ENCODE measurements at regions of chr18 and their contacts with region 1.

Region 1: GRCh38 chr18:9147440-9148202 is 11.0 kb downstream of the ANKRD12 start:
- DNase-seq: no peak
- H3K4me3 ChIP-seq: no peak overlapping the region
- H3K27ac ChIP-seq: peak overlapping the region in 1 of 2 donors; percentile 22
- H3K4me1 ChIP-seq: peaks cover 0 to 89% (median 38%) of the 10 kb centered on the region in 4 donors
- H3K27me3 ChIP-seq: no peaks in the 10 kb centered on the region
- CTCF ChIP-seq: peak; percentile 70 to 83

Region 2: GRCh38 chr18:8696749-8697211 is 450.8 kb before region 1 on chr18:
- intact Hi-C with region 1: loop called (anchors 5 kb)
- DNase-seq: peak; percentile 75 to 85
- H3K4me3 ChIP-seq: no peak overlapping the region
- H3K27ac ChIP-seq: no peak overlapping the region
- H3K4me1 ChIP-seq: no peaks in the 10 kb centered on the region
- H3K27me3 ChIP-seq: no peaks in the 10 kb centered on the region
- CTCF ChIP-seq: peak; percentile 76 to 81

Region 3: GRCh38 chr18:9069601-9070000 is 78.0 kb before region 1 on chr18:
- intact Hi-C with region 1: loop called (anchors 1 kb)
- DNase-seq: no peak
- H3K4me3 ChIP-seq: no peak overlapping the region
- H3K27ac ChIP-seq: no peak overlapping the region
- H3K4me1 ChIP-seq: peaks cover 0 to 5% (median 4%) of the 10 kb centered on the region in 4 donors
- H3K27me3 ChIP-seq: no peaks in the 10 kb centered on the region
- CTCF ChIP-seq: no peak

Measured in tibial artery (tissue), 4 donors.